MCF 10A (cell line): ENCODE measurements at regions of chr1 and their contacts with region 1.

Region 1: DNA sequence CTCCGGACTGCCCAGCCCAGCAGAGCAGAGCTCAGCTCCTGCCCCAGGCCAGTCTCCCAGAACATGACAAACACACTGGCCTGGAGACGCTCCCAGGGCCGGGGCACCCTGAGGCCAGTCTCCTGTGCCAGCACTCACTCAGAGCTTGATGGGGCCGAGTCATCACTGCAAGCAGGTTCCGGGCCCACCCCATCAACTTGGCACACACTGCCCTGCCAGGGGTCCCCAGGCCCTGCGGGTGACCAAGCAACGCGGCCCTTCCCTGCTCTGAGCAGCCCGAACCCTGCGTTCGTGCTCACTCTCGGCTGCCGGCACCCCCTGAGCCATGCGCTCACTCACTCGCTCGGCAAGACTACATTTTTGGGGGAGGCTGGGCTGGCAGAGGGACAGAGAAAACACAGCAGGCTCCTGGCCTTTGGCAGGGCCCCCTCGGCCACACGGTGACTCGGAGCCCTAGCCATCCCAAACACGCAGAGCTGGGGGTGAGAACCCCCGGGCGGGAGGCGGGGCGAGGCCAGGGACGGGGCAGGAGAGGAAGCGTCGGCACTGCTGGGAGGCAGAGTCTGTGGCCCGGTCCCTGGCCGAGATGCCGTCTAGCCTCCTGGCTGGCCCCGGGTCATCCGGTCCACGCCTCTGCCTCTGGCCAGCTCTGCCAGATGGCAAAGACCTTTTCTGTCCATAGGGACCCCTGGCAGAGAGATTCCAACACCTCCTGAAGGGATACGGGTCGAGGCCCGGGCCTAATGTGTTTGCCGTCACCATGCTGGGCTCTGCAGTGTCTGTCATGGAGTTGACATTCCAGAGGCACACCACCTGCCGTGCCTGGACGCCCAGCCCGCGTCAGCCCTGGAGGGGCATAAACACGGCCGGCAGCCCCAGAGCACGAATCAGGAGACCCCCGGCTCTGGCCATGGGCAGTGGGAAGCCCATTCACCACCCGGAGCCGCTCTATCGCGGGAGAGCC is 68.0 kb downstream of the MEGF6 start:
- DNase-seq: peak; percentile 91
- H3K4me3 Mint-ChIP-seq: no peak overlapping the region
- H3K27ac Mint-ChIP-seq: peak overlapping the region; percentile 83
- H3K4me1 Mint-ChIP-seq: peaks cover 15% of the 10 kb centered on the region
- H3K27me3 Mint-ChIP-seq: no peaks in the 10 kb centered on the region
- CTCF ChIP-seq: no peak

Region 2: DNA sequence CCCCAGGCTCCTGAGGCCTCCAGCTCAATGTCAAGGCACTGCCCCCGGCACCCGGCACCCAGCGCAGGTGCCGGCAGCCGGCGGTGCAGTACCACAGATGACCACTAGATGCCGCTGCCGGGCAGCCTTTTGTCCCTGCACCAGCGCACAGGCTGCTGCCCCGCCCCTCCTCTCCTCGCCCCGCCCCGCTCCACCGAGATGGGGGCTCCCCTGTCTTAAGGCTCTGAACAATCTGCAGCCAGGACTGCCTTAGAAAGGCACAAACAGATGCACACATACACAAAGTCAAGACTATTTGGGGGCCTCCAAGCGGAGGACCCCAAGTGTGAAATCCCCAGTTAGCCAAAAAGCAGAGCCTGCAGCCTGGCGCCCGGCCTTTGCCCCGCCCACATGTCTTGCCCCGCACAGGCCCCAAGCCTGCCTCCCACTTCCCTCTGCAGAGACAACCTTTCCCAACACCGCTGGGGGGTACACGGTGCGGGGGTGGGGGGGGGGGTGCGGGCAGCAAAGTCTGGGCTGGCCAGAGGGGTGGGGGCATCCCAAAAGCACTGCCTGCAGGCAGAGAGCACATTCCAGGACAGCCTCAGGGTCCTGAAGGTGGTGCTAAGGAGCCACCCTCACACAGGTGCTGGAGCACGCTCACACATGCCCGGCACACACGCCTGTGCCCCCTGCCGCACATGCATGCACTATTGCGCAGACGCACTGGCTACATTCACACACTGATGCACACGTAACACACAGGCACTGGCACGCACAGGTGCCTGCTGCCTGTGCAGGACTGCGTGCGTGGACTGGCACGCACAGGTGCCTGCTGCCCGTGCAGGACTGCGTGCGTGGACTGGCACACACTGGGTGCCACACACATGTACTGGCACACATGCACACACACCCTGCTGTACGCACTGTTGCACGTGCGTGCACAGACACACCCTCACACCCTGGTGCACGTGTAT is 51.8 kb before region 1 on chr1:
- CTCF ChIA-PET with region 1: interaction called, 12 read pairs
- POLR2A ChIA-PET with region 1: no interaction called
- intact Hi-C with region 1: no loop called
- DNase-seq: peak; percentile 66
- H3K4me3 Mint-ChIP-seq: no peak overlapping the region
- H3K27ac Mint-ChIP-seq: no peak overlapping the region
- H3K4me1 Mint-ChIP-seq: no peaks in the 10 kb centered on the region
- H3K27me3 Mint-ChIP-seq: no peaks in the 10 kb centered on the region
- CTCF ChIP-seq: peak; percentile 99

Region 3: DNA sequence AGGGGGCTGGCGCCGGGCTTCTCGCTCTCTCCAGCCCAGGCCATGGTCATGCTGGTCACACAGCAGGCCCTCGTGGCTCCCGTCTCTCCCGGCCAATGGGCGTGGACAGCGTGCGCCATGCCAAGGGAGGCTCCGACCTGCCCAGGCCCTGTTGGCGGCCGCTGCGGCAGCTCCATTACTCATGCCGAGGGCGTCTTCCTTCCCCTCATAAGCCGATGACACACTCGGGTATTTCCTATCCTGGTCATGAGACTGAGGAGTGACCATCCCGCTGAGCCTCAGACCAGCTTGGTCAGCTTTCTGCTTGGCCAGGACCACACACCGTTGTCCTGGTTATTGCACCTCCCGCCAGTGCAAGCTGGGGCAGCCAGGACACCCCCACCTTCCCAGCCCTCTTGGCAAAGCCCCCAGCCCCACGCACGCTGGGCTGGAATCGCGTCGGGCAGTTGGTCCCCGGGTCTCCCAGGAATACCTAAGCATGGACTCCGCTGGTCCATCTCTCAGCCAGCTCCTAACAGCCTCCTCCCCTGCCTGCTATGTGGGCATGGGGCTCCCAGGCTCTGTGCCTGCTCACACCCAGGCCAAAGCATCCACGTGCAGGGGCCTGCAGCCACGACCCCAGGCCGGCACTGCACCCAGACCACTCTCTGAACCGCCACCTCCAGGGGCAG is 39.1 kb before region 1 on chr1:
- CTCF ChIA-PET with region 1: interaction called, 3 read pairs
- POLR2A ChIA-PET with region 1: interaction called, 6 read pairs
- intact Hi-C with region 1: loop called (anchors 1 kb)
- DNase-seq: peak; percentile 91
- H3K4me3 Mint-ChIP-seq: no peak overlapping the region
- H3K27ac Mint-ChIP-seq: peak overlapping the region; percentile 32
- H3K4me1 Mint-ChIP-seq: peaks cover 13% of the 10 kb centered on the region
- H3K27me3 Mint-ChIP-seq: no peaks in the 10 kb centered on the region
- CTCF ChIP-seq: no peak

Region 4: DNA sequence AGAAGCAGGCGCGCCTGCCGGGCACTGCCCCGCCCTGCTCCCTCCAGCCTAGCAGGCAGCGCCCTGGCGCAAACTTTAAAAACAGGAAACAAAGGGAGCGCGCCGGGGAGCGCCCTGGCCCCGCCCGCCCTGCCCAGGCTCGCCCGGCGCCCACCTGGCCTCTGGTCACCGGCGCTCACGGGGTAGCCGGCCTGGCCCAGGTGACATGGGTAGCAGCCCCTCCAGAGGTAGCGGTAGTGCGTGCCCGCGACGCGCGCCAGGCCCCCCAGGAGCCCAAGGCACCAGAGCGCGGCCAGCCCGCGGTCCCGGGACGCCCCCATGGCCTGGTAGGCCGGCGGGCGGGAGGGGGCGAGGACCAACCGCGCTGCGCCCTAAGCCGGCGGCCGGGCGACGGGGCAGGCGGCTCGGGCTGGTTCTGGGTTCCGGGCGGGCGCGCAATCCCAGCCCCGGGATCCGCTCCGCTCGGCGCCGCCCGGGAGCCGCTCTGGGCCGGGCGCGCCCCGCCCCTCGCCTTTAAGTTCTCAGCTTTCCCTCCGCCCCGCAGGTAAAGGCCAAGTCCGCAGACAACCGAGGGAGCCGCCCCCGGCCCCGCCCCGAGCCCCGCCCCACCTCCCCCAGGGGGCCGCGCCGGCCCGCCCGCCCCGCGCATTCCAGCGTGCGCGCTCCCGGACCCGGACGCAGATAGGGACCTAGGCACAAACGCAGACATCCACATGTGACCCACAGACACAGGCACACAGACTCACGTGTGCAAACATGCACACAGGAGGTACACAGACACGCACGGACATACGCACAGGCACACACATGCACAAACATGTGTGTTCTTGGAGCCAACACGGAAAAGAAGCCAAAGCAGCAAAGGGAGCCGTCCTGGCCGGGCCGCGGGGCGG is 12.2 kb before region 1 on chr1:
- CTCF ChIA-PET with region 1: interaction called, 6 read pairs
- POLR2A ChIA-PET with region 1: interaction called, 13 read pairs
- intact Hi-C with region 1: no loop called
- DNase-seq: peak; percentile 87
- H3K4me3 Mint-ChIP-seq: peak overlapping the region; percentile 74
- H3K27ac Mint-ChIP-seq: peak overlapping the region; percentile 47
- H3K4me1 Mint-ChIP-seq: peaks cover 12% of the 10 kb centered on the region
- H3K27me3 Mint-ChIP-seq: no peaks in the 10 kb centered on the region
- CTCF ChIP-seq: no peak

Region 5: GRCh38 chr1:3609016-3609768 is 65.8 kb after region 1 on chr1:
- CTCF ChIA-PET with region 1: no interaction called
- POLR2A ChIA-PET with region 1: no interaction called
- intact Hi-C with region 1: no loop called
- DNase-seq: no peak
- H3K4me3 Mint-ChIP-seq: no peak overlapping the region
- H3K27ac Mint-ChIP-seq: no peak overlapping the region
- H3K4me1 Mint-ChIP-seq: peaks cover 11% of the 10 kb centered on the region
- H3K27me3 Mint-ChIP-seq: no peaks in the 10 kb centered on the region
- CTCF ChIP-seq: no peak

Region 6: DNA sequence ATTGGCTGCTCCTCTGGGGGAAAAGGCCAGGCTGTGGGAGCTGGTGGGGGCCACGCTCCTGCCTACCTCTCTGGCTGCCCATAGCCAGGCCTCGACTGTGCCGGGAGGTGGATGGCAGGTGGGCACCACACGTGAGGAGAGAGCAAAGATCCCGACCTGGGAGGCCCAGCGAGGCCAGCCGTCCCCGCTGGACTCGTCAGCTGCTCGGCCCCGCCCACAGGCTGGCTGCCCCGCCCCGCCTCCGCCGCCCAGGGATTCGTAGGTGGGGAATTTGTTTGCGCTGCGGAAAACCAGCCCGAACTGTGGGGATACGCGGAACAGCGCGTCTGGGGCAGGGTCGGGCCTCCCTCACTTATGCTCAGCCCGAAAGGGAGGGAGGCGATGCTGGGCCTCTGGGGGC is 140.6 kb after region 1 on chr1:
- CTCF ChIA-PET with region 1: no interaction called
- POLR2A ChIA-PET with region 1: no interaction called
- intact Hi-C with region 1: no loop called
- DNase-seq: no peak
- H3K4me3 Mint-ChIP-seq: no peak overlapping the region
- H3K27ac Mint-ChIP-seq: no peak overlapping the region
- H3K4me1 Mint-ChIP-seq: peaks cover 10% of the 10 kb centered on the region
- H3K27me3 Mint-ChIP-seq: peaks cover 9% of the 10 kb centered on the region
- CTCF ChIP-seq: no peak